ENCODE measurements at regions of chr12 and their contacts with region 1.

Region 1: GRCh38 chr12:48758221-48758620 is 30.7 kb downstream of the ADCY6 start:
- DNase-seq: no peak
- ATAC-seq: peak; percentile 20 to 42

Region 2: GRCh38 chr12:48263617-48264016 is 494.6 kb before region 1 on chr12:
- intact Hi-C with region 1: no loop called
- DNase-seq: no peak
- ATAC-seq: no peak

Region 3: GRCh38 chr12:48795480-48796455 is 37.5 kb after region 1 on chr12:
- intact Hi-C with region 1: loop called (anchors 1 to 2 kb)
- DNase-seq: peak; percentile 74
- ATAC-seq: peak; percentile 93 to 94

Measured in left cardiac atrium (tissue), 4 donors.